Gastrocnemius medialis (tissue), 4 donors: ENCODE measurements at regions of chr9 and their contacts with region 1.

Region 1: DNA sequence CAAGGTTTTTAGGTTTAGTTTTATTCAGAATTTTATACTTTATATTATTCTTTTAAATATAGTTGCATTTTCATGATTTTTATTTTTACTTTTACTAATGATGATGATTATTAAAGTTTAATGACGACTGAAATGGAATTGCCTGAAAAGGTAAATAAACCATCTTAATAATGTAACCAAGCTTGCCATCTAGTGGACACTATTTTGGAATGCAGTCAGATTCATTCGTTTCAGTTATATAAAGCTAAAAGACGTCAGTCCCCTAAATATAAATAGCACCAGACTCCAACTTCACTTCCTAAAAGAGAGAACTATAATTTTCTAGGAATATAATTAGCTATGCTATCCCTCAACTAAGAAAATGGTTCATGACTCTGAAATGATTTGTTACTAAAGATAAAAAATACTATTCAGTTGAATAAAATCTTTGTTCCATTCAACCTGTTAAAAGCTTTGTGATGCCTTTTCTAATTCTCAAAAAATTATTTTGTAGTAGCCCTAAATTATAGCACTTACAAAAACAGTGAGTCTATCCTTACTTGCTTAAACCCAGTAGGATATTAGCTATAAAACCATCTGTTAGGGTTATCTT is 19.9 kb downstream of the ABITRAM start:
- DNase-seq: no peak
- ATAC-seq: peak in 1 of 2 donors; percentile 53
- H3K4me3 ChIP-seq: no peak overlapping the region
- H3K27ac ChIP-seq: peak overlapping the region; percentile 11 to 52 (median 24)
- H3K4me1 ChIP-seq: peaks cover 0 to 7% of the 10 kb centered on the region in 2 donors
- H3K27me3 ChIP-seq: no peaks in the 10 kb centered on the region
- CTCF ChIP-seq: peak; percentile 31 to 57 (median 51)
- POLR2A ChIP-seq: no peak

Region 2: GRCh38 chr9:108850293-108850897 is 103.7 kb before region 1 on chr9:
- in situ Hi-C with region 1: loop called in 1 of 4 experiments (anchors 25 kb)
- intact Hi-C with region 1: no loop called
- DNase-seq: no peak
- ATAC-seq: no peak
- H3K4me3 ChIP-seq: no peak overlapping the region
- H3K27ac ChIP-seq: no peak overlapping the region
- H3K4me1 ChIP-seq: no peaks in the 10 kb centered on the region
- H3K27me3 ChIP-seq: peaks cover 0 to 3% (median 0%) of the 10 kb centered on the region in 3 donors
- CTCF ChIP-seq: no peak
- POLR2A ChIP-seq: no peak